Activated T-helper 1 cell treated with anti-CD3 and anti-CD28 coated beads, Interleukin-12 subunit alpha, Interleukin-12 subunit beta, Interleukin-2, Interleukin-4 antibody, amounts not matched to agents 30 ng/mL and 10 ng/mL and 1 ng/mL, durations not matched to agents 14 hours and 24 hours and 36 hours (primary cell): ENCODE measurements at regions of chr2 and their contacts with region 1.

Region 1: GRCh38 chr2:42238644-42239288 is 69.6 kb downstream of the EML4 start:
- DNase-seq: no peak
- H3K4me3 Mint-ChIP-seq: no peak overlapping the region
- H3K27ac Mint-ChIP-seq: no peak overlapping the region
- H3K4me1 Mint-ChIP-seq: peaks cover 24% of the 10 kb centered on the region
- H3K27me3 Mint-ChIP-seq: no peaks in the 10 kb centered on the region

Region 2: GRCh38 chr2:42223855-42224268 is 14.9 kb before region 1 on chr2:
- intact Hi-C with region 1: loop called (anchors 2 kb)
- DNase-seq: no peak
- H3K4me3 Mint-ChIP-seq: no peak overlapping the region
- H3K27ac Mint-ChIP-seq: peak overlapping the region; percentile 10
- H3K4me1 Mint-ChIP-seq: peaks cover 46% of the 10 kb centered on the region
- H3K27me3 Mint-ChIP-seq: no peaks in the 10 kb centered on the region